Psoas muscle (tissue), 8 donors: ENCODE measurements at regions of chr9 and their contacts with region 1.

Region 1: GRCh38 chr9:77375956-77376532 is 198.7 kb downstream of the VPS13A start:
- DNase-seq: no peak
- ATAC-seq: no peak
- H3K4me3 ChIP-seq: no peak overlapping the region
- H3K27ac ChIP-seq: no peak overlapping the region
- H3K4me1 ChIP-seq: no peaks in the 10 kb centered on the region
- H3K27me3 ChIP-seq: no peaks in the 10 kb centered on the region
- CTCF ChIP-seq: no peak

Region 2: DNA sequence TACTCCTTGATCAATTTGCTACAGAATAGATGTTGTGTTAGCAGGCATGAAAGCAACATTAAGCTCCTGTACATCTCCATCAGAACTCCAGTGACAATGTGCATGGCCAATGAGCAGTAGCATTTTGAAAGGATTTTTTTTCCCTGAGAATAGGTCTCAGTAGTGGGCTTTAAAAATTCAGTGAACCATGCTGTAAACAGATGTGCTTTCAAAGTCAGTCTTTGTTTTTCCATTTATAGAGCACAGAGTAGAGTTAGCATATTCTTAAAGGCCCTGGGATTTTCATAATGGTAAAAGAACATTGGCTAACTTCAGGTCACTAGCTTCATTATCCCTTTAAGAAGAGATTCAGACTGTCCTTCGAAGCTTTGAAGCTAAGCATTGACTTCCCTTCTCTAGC is 47.9 kb before region 1 on chr9:
- intact Hi-C with region 1: loop called in 1 of 2 experiments (anchors 5 kb)
- DNase-seq: no peak
- ATAC-seq: no peak
- H3K4me3 ChIP-seq: no peak overlapping the region
- H3K27ac ChIP-seq: no peak overlapping the region
- H3K4me1 ChIP-seq: no peaks in the 10 kb centered on the region
- H3K27me3 ChIP-seq: no peaks in the 10 kb centered on the region
- CTCF ChIP-seq: no peak